Activated T-helper 2 cell treated with anti-CD3 and anti-CD28 coated beads, Interferon-gamma antibody, Interleukin-2, Interleukin-4, amounts not matched to agents 10 μg/mL and 5 μg/mL and 100 μg/mL, durations not matched to agents 14 hours and 24 hours and 36 hours (primary cell): ENCODE measurements at regions of chr7 and their contacts with region 1.

Region 1: GRCh38 chr7:130996841-130997231 is 262.8 kb upstream of the KLF14 start:
- DNase-seq: no peak
- H3K4me3 Mint-ChIP-seq: peak overlapping the region; percentile 66
- H3K27ac Mint-ChIP-seq: peak overlapping the region; percentile 90
- H3K4me1 Mint-ChIP-seq: peaks cover 66% of the 10 kb centered on the region
- H3K27me3 Mint-ChIP-seq: no peaks in the 10 kb centered on the region

Region 2: GRCh38 chr7:130970696-130971095 is 26.1 kb before region 1 on chr7:
- intact Hi-C with region 1: loop called (anchors 1 kb)
- DNase-seq: no peak
- H3K4me3 Mint-ChIP-seq: peak overlapping the region; percentile 44
- H3K27ac Mint-ChIP-seq: peak overlapping the region; percentile 94
- H3K4me1 Mint-ChIP-seq: peaks cover 70% of the 10 kb centered on the region
- H3K27me3 Mint-ChIP-seq: no peaks in the 10 kb centered on the region